WTC11 (cell line): ENCODE measurements at regions of chr3 and their contacts with region 1.

Region 1: DNA sequence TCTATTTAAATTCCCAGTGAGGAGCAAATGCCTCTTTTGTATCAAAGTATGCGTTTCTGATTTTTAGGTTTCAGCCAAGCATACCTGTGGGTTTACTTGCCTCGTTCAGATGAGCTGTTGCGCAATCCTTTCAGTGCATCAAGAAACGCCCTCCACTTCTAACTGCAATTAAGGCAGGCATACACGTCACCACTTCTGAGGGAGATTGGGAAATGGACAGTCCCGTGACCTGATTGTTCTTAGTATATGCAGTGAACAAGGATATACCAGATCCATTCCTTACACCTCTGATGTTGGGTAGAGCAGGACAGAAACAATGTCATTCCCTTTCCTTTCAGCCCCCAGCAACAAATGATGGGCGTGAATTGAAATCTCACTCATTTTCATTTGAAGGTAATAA is 219.0 kb downstream of the ITPR1 start:
- DNase-seq: no peak
- ATAC-seq: no peak
- H3K4me3 Mint-ChIP-seq: no peak overlapping the region
- H3K27ac Mint-ChIP-seq: no peak overlapping the region
- H3K4me1 Mint-ChIP-seq: peaks cover 46% of the 10 kb centered on the region
- H3K27me3 Mint-ChIP-seq: no peaks in the 10 kb centered on the region
- CTCF ChIP-seq: no peak

Region 2: GRCh38 chr3:4623421-4623999 is 88.6 kb before region 1 on chr3:
- CTCF ChIA-PET with region 1: no interaction called
- POLR2A ChIA-PET with region 1: no interaction called
- DNase-seq: no peak
- ATAC-seq: no peak
- H3K4me3 Mint-ChIP-seq: no peak overlapping the region
- H3K27ac Mint-ChIP-seq: no peak overlapping the region
- H3K4me1 Mint-ChIP-seq: no peaks in the 10 kb centered on the region
- H3K27me3 Mint-ChIP-seq: no peaks in the 10 kb centered on the region
- CTCF ChIP-seq: no peak

Region 3: GRCh38 chr3:4730719-4731118 is 18.6 kb after region 1 on chr3:
- CTCF ChIA-PET with region 1: interaction called, 14 read pairs
- POLR2A ChIA-PET with region 1: no interaction called
- DNase-seq: no peak
- ATAC-seq: no peak; the same call in 1 of the 2 replicates
- H3K4me3 Mint-ChIP-seq: no peak overlapping the region
- H3K27ac Mint-ChIP-seq: no peak overlapping the region
- H3K4me1 Mint-ChIP-seq: peaks cover 44% of the 10 kb centered on the region
- H3K27me3 Mint-ChIP-seq: no peaks in the 10 kb centered on the region
- CTCF ChIP-seq: no peak

Region 4: GRCh38 chr3:4776980-4777581 is 64.9 kb after region 1 on chr3:
- CTCF ChIA-PET with region 1: interaction called, 11 read pairs
- POLR2A ChIA-PET with region 1: interaction called, 3 read pairs
- DNase-seq: no peak
- ATAC-seq: no peak
- H3K4me3 Mint-ChIP-seq: no peak overlapping the region
- H3K27ac Mint-ChIP-seq: no peak overlapping the region; the same call in 1 of the 2 replicates
- H3K4me1 Mint-ChIP-seq: no peaks in the 10 kb centered on the region
- H3K27me3 Mint-ChIP-seq: no peaks in the 10 kb centered on the region
- CTCF ChIP-seq: no peak

Region 5: GRCh38 chr3:4978204-4978965 is 266.2 kb after region 1 on chr3:
- CTCF ChIA-PET with region 1: interaction called, 110 read pairs
- POLR2A ChIA-PET with region 1: no interaction called
- DNase-seq: peak; percentile 84
- ATAC-seq: peak; percentile 50
- H3K4me3 Mint-ChIP-seq: peak overlapping the region; percentile 93
- H3K27ac Mint-ChIP-seq: peak overlapping the region; percentile 73
- H3K4me1 Mint-ChIP-seq: peaks cover 35% of the 10 kb centered on the region
- H3K27me3 Mint-ChIP-seq: peaks cover 25% of the 10 kb centered on the region
- CTCF ChIP-seq: no peak

Region 6: GRCh38 chr3:4986782-4987537 is 274.8 kb after region 1 on chr3:
- CTCF ChIA-PET with region 1: interaction called, 13 read pairs
- POLR2A ChIA-PET with region 1: no interaction called
- DNase-seq: peak; percentile 93
- ATAC-seq: peak; percentile 91
- H3K4me3 Mint-ChIP-seq: peak overlapping the region; percentile 65
- H3K27ac Mint-ChIP-seq: peak overlapping the region; percentile 74
- H3K4me1 Mint-ChIP-seq: peaks cover 47% of the 10 kb centered on the region
- H3K27me3 Mint-ChIP-seq: no peaks in the 10 kb centered on the region; the same call in 1 of the 2 replicates
- CTCF ChIP-seq: no peak

Region 7: GRCh38 chr3:5026331-5027218 is 314.4 kb after region 1 on chr3:
- CTCF ChIA-PET with region 1: interaction called, 25 read pairs
- POLR2A ChIA-PET with region 1: interaction called, 6 read pairs
- DNase-seq: peak; percentile 84
- ATAC-seq: peak; percentile 95
- H3K4me3 Mint-ChIP-seq: peak overlapping the region; percentile 85
- H3K27ac Mint-ChIP-seq: peak overlapping the region; percentile 84
- H3K4me1 Mint-ChIP-seq: peaks cover 14% of the 10 kb centered on the region
- H3K27me3 Mint-ChIP-seq: no peaks in the 10 kb centered on the region; the same call in 1 of the 2 replicates
- CTCF ChIP-seq: no peak

Region 8: DNA sequence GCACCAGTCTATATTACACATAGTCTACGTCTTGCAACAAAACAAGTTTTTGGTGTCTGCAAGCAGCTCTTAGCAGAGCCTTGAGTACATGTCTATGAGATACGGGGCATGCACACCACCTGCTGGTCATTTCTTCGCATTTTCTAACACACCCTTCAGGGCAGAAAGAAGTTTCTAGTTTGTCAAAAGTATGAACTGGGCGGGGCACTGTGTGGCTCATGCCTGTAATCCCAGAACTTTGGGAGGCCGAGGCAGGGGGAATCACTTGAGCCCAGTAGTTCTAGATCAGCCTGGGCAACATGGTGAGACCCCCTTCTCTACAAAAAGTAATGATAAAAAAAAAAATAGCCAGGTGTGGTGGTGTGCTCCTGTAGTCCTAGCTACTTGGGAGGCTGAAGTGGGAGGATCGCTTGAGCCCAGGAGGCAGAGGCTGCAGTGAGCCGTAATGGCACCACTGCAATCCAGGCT is 345.7 kb after region 1 on chr3:
- CTCF ChIA-PET with region 1: interaction called, 27 read pairs
- POLR2A ChIA-PET with region 1: no interaction called
- DNase-seq: peak; percentile 35
- ATAC-seq: peak; percentile 81
- H3K4me3 Mint-ChIP-seq: no peak overlapping the region
- H3K27ac Mint-ChIP-seq: no peak overlapping the region
- H3K4me1 Mint-ChIP-seq: no peaks in the 10 kb centered on the region
- H3K27me3 Mint-ChIP-seq: no peaks in the 10 kb centered on the region
- CTCF ChIP-seq: peak; percentile 29; the same call in 1 of the 2 replicates